ENCODE measurements at regions of chr20 and their contacts with region 1.

Region 1: DNA sequence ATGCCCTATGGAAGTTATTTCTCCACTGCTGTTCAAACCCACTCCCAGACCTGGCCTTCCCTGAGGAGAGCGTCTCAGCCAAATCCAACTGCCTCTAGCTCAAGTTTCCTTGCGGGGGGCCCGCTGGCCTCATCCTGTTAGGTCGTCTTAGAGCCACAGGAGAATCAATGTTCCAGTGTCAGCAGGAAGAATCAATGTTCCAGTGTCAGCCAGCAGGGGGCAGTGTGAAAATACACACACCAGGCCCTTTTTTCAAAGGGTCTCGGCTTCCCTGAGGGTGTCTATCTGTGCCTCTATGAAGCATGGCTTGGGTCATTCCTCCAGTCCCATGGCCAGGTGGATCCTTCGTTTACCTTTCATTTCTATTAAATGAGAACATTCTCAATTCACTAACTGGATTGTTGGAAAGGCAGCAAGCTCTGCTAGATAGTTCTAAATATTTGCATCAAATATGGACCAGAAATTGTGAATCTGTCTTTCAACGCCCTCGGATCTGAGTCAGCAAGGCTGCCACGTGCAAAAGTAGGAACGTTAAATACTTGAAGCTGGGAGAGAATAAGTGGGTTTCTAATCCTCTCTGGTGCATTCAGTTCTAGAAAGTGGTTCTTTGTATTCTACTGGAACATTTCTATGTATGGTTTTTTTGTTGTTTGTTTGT is 19.2 kb downstream of the PRND start:
- DNase-seq: peak; percentile 59
- CTCF ChIP-seq: peak; percentile 81

Region 2: DNA sequence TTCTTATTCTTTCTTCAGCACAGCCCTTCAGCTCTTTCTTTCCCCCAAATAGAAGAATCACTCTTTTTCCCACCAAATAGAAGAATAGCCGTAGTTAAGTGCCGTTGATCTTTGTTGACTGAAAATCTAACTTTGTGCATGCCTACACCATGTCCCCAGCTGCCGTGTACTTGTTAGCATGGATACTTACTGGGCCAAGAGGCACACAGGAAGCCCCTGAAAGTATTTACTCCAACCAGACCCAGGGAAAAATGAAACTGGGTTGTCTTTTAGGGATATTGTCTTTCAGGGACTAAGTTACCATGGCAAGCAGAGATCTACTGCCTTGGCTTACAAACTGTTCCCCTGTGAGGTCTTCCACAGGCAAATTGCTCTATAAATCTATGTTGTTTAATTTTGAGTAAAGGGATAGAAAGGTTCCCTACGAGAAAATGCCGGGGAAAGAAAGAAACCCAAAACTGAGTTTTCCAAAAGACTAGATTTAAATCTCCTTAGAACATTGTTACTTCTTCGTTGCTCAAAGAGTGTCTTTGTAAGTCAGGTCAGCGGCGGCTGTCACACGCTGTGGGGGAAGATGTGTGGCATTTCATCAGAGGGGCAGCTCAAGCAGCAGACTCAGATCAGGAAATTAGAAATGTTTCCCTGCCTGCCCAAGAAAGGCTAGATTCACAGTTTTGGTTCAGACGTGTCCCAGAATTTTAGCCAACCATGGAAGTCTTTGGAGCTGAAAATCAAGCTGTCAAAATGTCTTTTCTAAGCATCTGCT is 207.4 kb before region 1 on chr20:
- CTCF ChIA-PET with region 1: no interaction called
- POLR2A ChIA-PET with region 1: no interaction called
- DNase-seq: no peak
- CTCF ChIP-seq: no peak

Region 3: DNA sequence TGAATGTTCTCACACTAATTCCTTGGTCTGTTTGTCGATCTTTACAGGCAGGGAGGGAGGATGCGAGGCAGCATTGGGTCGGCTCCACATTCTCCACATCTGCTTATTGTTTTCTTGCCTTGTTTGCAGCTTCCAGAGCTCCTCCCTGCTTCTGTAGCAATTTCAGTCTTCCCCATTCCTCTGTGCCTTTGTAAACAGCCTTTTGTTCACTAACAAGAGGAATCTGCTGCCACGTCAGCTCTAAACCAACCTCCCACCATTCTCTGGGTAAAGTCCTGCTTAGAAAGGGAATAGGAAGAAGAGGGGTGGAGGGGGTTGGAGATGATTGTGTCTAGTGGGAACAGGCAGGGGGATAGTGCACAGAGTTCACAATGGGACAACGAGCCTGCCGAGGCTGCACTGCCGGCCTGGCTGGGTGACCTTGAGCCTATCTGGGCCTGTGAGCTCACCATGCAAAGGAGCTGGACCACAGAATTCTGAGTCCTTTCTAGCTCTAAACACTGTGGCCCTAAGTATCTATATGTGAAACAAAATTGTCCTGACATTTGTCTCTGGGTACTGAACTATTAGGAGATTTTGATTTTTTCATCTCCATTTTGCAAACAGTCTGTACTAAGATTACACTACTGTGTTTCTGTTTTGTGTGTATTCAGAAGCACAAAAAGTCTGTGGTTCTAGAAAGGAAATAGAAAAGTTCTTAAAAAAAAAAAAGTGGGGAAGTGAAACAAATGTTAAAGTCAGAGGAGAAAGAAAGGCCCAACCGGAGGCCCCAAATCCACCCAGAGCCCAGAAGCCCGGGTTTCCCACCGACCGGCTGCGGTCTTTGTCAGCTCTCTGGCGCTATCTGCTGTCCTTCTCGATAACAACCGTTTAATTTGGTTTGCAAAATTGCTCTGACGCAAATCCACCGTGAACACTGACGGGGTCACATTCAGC is 20.6 kb before region 1 on chr20:
- CTCF ChIA-PET with region 1: interaction called, 30 read pairs
- POLR2A ChIA-PET with region 1: no interaction called
- DNase-seq: peak; percentile 94
- CTCF ChIP-seq: peak; percentile 74

Region 4: GRCh38 chr20:4726710-4727397 is 14.0 kb before region 1 on chr20:
- CTCF ChIA-PET with region 1: interaction called, 30 read pairs
- POLR2A ChIA-PET with region 1: no interaction called
- DNase-seq: peak; percentile 57
- CTCF ChIP-seq: no peak

Region 5: GRCh38 chr20:4944518-4945313 is 203.8 kb after region 1 on chr20:
- CTCF ChIA-PET with region 1: interaction called, 13 read pairs
- POLR2A ChIA-PET with region 1: no interaction called
- DNase-seq: no peak
- CTCF ChIP-seq: no peak